Gastrocnemius medialis (tissue), 4 donors: ENCODE measurements at regions of chr1 and their contacts with region 1.

Region 1: DNA sequence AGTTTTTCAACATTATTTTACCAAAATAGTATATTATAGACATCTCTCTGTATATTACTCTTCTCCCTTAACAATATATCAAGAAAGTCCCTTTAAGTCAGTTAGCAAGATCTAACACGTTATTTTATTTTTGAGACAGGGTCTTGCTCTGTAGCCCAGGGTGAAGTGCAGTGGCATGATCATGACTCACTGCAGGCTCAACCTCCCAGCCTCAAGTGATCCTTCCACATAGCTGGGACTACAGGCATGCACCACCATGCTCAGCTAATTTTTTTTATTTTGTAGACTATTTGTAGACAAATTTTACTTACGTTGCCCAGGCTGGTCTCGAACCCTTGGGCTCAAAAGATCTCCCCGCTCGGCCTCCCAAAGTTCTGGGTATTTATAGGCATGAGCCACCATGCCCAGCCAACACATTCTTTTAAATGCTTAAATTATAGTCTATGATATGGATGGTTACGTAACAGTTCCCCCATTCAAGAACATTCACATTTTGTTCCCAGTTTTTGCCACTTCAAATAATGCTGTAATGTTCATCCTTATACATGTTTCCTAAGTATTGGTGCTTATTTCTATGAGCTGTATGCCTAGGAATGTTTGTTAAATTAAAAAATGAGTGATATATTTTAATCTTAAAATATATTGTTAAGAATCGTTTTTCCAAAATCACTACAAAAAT is 70.4 kb downstream of the TUT4 start:
- DNase-seq: no peak
- ATAC-seq: no peak
- H3K4me3 ChIP-seq: no peak overlapping the region
- H3K27ac ChIP-seq: no peak overlapping the region
- H3K4me1 ChIP-seq: no peaks in the 10 kb centered on the region
- H3K27me3 ChIP-seq: no peaks in the 10 kb centered on the region
- CTCF ChIP-seq: no peak
- POLR2A ChIP-seq: no peak

Region 2: GRCh38 chr1:52424231-52424636 is 58.2 kb before region 1 on chr1:
- in situ Hi-C with region 1: no loop called
- intact Hi-C with region 1: no loop called
- DNase-seq: no peak
- ATAC-seq: no peak
- H3K4me3 ChIP-seq: no peak overlapping the region
- H3K27ac ChIP-seq: no peak overlapping the region
- H3K4me1 ChIP-seq: no peaks in the 10 kb centered on the region
- H3K27me3 ChIP-seq: no peaks in the 10 kb centered on the region
- CTCF ChIP-seq: no peak
- POLR2A ChIP-seq: no peak

Region 3: GRCh38 chr1:52542085-52542688 is 59.7 kb after region 1 on chr1:
- in situ Hi-C with region 1: no loop called
- intact Hi-C with region 1: no loop called
- DNase-seq: no peak
- ATAC-seq: no peak
- H3K4me3 ChIP-seq: no peak overlapping the region
- H3K27ac ChIP-seq: no peak overlapping the region
- H3K4me1 ChIP-seq: peaks cover 2 to 3% of the 10 kb centered on the region in 2 donors
- H3K27me3 ChIP-seq: no peaks in the 10 kb centered on the region
- CTCF ChIP-seq: no peak
- POLR2A ChIP-seq: no peak

Region 4: GRCh38 chr1:52683367-52683940 is 201.0 kb after region 1 on chr1:
- in situ Hi-C with region 1: no loop called
- intact Hi-C with region 1: loop called (anchors 10 kb)
- DNase-seq: no peak
- ATAC-seq: no peak
- H3K4me3 ChIP-seq: no peak overlapping the region
- H3K27ac ChIP-seq: no peak overlapping the region
- H3K4me1 ChIP-seq: peaks cover 15 to 16% of the 10 kb centered on the region in 2 donors
- H3K27me3 ChIP-seq: no peaks in the 10 kb centered on the region
- CTCF ChIP-seq: no peak
- POLR2A ChIP-seq: no peak